Transverse colon (tissue), 4 donors: ENCODE measurements at regions of chr1 and their contacts with region 1.

Region 1: GRCh38 chr1:201895913-201896807 is 7.5 kb downstream of the SHISA4 start:
- DNase-seq: peak; percentile 92
- H3K4me3 ChIP-seq: no peak overlapping the region
- H3K27ac ChIP-seq: peak overlapping the region; percentile 64 to 86 (median 74)
- H3K4me1 ChIP-seq: peaks cover 0 to 30% (median 1%) of the 10 kb centered on the region in 4 donors
- H3K27me3 ChIP-seq: no peaks in the 10 kb centered on the region
- CTCF ChIP-seq: peak; percentile 89 to 97 (median 91)
- EP300 ChIP-seq: no peak
- POLR2A ChIP-seq: peak; percentile 11

Region 2: GRCh38 chr1:201946224-201946908 is 50.2 kb after region 1 on chr1 and contains the start of gene LMOD1:
- in situ Hi-C with region 1: no loop called
- intact Hi-C with region 1: loop called (anchors 2 kb)
- DNase-seq: peak; percentile 82
- H3K4me3 ChIP-seq: peak within 1 kb of the TSS; percentile 40 to 57 (median 50)
- H3K27ac ChIP-seq: peak within 1 kb of the TSS; percentile 84 to 91 (median 88)
- H3K4me1 ChIP-seq: peaks cover 0 to 10% (median 7%) of the 10 kb centered on the region in 4 donors
- H3K27me3 ChIP-seq: peaks cover 32% of the 10 kb centered on the region
- CTCF ChIP-seq: peak in 2 of 5 experiments; percentile 11 to 13
- EP300 ChIP-seq: no peak
- POLR2A ChIP-seq: peak; percentile 91
- total RNA-seq, gene LMOD1: 73.2 to 166 (median 115) TPM

Region 3: DNA sequence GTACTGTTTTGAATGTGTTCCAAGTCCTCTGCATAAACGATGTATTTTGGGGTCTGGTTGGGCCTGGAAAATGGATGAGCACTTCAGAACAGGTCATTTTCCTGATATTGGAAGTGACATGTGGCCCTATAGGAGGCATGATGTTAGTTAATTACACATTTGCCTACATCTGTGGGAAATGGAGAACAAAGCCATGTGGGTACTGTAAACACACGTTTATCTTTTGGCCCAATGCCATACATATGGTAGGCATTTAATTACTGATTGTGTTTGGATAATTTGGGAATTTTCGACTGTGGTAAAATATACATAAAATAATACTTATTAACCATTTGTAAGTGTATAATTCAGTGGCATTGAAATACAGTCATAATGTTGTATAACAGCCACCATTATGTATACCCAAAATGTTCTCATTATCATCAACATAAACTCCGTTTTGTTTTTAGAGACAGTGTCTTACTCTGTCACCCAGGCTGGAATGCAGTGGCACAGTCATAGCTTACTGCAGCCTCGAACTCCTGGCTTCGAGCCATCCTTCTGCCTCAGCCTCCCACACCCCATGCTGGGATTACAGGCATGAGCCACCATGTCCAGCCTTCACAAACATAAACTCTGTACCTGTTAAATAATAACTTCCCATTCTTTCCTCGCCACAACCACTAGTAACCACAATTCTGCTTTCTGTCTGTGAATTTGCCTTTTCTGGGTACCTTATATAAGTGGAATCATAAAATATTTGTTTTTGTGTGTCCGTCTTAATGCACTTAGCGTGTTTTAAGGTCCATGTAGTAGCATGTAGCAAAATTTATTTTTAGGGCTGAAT is 74.4 kb after region 1 on chr1:
- in situ Hi-C with region 1: loop called in 3 of 4 experiments (anchors 5 to 10 kb)
- intact Hi-C with region 1: loop called (anchors 5 kb)
- DNase-seq: no peak
- H3K4me3 ChIP-seq: no peak overlapping the region
- H3K27ac ChIP-seq: no peak overlapping the region
- H3K4me1 ChIP-seq: peaks cover 0 to 6% (median 2%) of the 10 kb centered on the region in 4 donors
- H3K27me3 ChIP-seq: no peaks in the 10 kb centered on the region
- CTCF ChIP-seq: no peak
- EP300 ChIP-seq: no peak
- POLR2A ChIP-seq: no peak

Region 4: DNA sequence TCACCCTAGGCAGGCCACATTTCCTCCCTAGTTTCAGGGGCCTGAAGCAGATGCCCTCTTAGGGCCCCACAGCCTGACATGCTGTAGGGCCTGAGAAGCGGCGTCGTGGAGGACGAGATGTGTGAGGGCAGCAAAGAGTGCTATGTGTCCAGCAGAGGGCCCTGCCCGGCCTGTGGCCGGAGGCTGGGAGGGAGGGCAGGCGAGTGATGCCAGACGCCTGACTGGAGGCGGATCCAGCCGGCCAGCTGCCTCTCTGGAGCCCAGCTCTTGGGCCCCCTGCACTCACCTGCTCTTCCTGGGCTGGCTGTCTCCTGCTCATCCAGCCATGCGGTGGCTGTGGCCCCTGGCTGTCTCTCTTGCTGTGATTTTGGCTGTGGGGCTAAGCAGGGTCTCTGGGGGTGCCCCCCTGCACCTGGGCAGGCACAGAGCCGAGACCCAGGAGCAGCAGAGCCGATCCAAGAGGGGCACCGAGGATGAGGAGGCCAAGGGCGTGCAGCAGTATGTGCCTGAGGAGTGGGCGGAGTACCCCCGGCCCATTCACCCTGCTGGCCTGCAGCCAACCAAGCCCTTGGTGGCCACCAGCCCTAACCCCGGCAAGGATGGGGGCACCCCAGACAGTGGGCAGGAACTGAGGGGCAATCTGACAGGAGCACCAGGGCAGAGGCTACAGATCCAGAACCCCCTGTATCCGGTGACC is 226.6 kb after region 1 on chr1 and contains the start of gene GPR37L1:
- in situ Hi-C with region 1: loop called in 3 of 4 experiments (anchors 10 to 25 kb)
- intact Hi-C with region 1: no loop called
- DNase-seq: no peak
- H3K4me3 ChIP-seq: no peak within 1 kb of the TSS
- H3K27ac ChIP-seq: no peak within 1 kb of the TSS
- H3K4me1 ChIP-seq: peaks cover 0 to 11% (median 0%) of the 10 kb centered on the region in 4 donors
- H3K27me3 ChIP-seq: no peaks in the 10 kb centered on the region
- CTCF ChIP-seq: peak in 2 of 5 experiments; percentile 7 to 10
- EP300 ChIP-seq: no peak
- POLR2A ChIP-seq: no peak
- total RNA-seq, gene GPR37L1: 0.55 to 0.95 TPM in 2 of 4 donors, not detected in the others

Region 5: GRCh38 chr1:202135221-202135721 is 239.1 kb after region 1 on chr1:
- in situ Hi-C with region 1: loop called in 2 of 4 experiments (anchors 25 kb)
- intact Hi-C with region 1: no loop called
- DNase-seq: peak; percentile 55
- H3K4me3 ChIP-seq: no peak overlapping the region
- H3K27ac ChIP-seq: peak overlapping the region in 3 of 4 donors; percentile 12 to 51 (median 15)
- H3K4me1 ChIP-seq: peaks cover 8 to 26% (median 12%) of the 10 kb centered on the region in 4 donors
- H3K27me3 ChIP-seq: no peaks in the 10 kb centered on the region
- CTCF ChIP-seq: peak; percentile 74 to 90 (median 83)
- EP300 ChIP-seq: no peak
- POLR2A ChIP-seq: no peak